Natural killer cell (primary cell): ENCODE measurements at regions of chr6 and their contacts with region 1.

Region 1: DNA sequence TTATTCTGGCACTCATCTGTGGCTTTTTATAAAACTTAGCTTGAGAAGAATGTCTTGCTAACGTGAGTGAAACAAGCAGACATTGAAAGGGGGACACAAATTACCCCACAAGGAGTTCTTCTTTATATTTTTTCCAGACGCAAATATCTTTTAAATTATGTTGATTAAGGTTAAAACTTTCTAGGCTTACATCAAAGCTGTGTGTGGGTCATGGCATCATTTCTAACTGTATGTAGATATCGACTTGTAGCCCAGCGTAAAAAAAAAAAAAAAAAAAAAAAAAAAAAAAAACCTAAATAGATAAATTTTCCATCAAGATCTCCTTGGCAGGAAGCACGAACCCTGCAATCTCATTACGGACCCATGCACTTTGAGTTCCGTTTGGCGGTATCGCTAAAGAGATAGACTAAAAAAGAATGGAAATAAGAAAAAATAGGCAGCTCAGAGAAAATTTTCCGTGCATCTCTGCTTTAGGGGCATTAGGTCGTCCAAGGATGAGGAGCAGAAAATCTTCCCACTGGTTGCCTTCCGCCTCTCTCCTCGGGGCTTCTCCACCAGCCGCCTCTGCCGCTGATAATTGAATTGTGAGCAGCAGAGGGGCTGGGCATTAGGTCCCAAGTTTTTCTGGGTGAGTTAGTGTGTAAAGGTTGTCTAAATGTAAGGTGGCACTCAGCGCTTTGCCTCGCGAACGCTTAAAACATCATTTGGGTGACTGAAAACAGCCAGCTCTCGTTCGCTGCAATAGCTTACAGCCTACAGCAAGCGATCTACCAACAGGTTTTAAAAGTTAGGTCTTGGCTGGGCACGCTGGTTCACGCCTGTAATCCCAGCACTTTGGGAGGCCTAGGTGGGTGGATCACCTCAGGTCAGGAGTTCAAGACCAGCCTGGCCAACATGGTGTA is 194.0 kb downstream of the TRIM27 start:
- DNase-seq: no peak
- ATAC-seq: no peak
- H3K4me3 ChIP-seq: no peak overlapping the region
- H3K4me3 Mint-ChIP-seq: peak overlapping the region; percentile 91
- H3K27ac ChIP-seq: no peak overlapping the region
- H3K27ac Mint-ChIP-seq: peak overlapping the region; percentile 80 to 89
- H3K4me1 ChIP-seq: peaks cover 3% of the 10 kb centered on the region
- H3K4me1 Mint-ChIP-seq: peaks cover 18 to 22% of the 10 kb centered on the region in 2 donors
- H3K27me3 ChIP-seq: peaks cover 50% of the 10 kb centered on the region
- H3K27me3 Mint-ChIP-seq: peaks cover 39 to 62% of the 10 kb centered on the region in 2 donors
- CTCF ChIP-seq: no peak

Region 2: GRCh38 chr6:28816909-28817807 is 87.4 kb after region 1 on chr6:
- intact Hi-C with region 1: loop called (anchors 10 kb)
- DNase-seq: no peak
- ATAC-seq: no peak
- H3K4me3 ChIP-seq: no peak overlapping the region
- H3K4me3 Mint-ChIP-seq: no peak overlapping the region
- H3K27ac ChIP-seq: no peak overlapping the region
- H3K27ac Mint-ChIP-seq: no peak overlapping the region
- H3K4me1 ChIP-seq: peaks cover 5% of the 10 kb centered on the region
- H3K4me1 Mint-ChIP-seq: peaks cover 0 to 16% of the 10 kb centered on the region in 2 donors
- H3K27me3 ChIP-seq: peaks cover 76% of the 10 kb centered on the region
- H3K27me3 Mint-ChIP-seq: peaks cover 71 to 79% of the 10 kb centered on the region in 2 donors
- CTCF ChIP-seq: no peak